ENCODE measurements at regions of chr15 and their contacts with region 1.

Region 1: DNA sequence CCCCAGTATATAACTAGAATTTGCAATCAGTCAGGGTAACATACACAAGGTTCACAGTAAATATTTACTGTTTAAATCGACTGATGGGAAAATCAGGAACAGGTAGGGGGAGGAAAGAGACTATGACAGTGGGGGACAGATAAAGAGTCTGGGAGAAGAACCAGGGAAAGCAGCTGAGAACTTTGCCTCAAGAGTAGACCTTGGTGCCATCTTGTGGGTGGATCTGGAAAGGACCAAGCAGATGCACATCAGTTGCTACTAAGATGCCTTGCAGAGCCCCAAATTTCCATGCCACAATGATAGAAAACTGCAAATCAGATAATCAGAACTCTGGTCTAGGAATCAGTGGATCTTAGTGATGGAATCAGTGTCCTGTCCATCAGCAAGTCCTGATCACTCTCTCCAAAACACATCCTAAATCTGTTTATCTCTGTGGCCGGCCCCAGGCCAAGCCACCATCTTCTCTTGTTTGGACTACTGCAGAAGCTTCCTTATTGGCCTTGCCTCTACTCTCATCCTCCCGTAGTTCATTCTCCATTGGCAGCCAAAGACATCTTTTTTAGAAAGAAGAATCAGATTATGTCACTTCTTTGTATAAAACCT is 62.7 kb downstream of the PDE8A start:
- DNase-seq: peak in 2 of 3 donors; percentile 41 to 50
- H3K4me3 ChIP-seq: no peak overlapping the region
- H3K4me3 Mint-ChIP-seq: no peak overlapping the region
- H3K27ac ChIP-seq: no peak overlapping the region
- H3K27ac Mint-ChIP-seq: peak overlapping the region in 1 of 7 donors; percentile 53
- H3K4me1 ChIP-seq: peaks cover 0 to 5% of the 10 kb centered on the region in 2 donors
- H3K4me1 Mint-ChIP-seq: peaks cover 8% of the 10 kb centered on the region
- H3K27me3 ChIP-seq: no peaks in the 10 kb centered on the region
- H3K27me3 Mint-ChIP-seq: peaks cover 0 to 1% (median 0%) of the 10 kb centered on the region in 3 donors
- CTCF ChIP-seq: peak; percentile 68

Region 2: DNA sequence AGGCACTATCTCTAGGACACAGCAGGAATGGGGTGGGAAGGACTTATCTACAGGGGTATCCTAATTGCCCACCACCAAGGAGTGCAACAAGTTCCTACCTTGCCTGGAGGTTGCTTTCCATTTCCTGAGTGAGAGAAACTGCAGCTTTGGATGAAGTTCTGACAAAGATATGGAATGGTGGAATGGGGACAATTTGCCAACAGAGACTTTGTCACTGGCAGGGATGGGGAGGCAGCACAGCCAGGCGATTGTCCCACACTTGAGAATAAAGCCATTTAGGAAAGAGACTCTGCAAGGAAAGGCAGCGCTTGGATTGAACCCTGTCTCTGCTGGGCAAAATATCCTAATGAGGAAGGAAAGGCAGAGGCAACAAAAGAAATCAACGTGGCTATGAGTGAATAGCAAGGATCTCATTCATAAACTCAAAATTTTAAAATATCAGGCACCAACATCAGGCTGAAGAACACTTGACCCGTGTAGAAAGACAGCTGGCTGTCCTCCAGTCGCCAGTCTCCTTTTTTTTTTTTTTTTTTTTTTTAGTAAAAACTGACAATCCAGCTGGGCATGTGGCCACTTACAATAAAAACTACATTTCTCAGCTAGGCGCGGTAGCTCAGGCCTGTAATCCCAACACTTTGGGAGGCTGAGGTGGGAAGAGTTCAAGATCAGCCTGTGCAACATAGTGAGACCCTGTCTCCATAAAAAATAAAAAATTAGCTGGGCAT is 94.3 kb before region 1 on chr15:
- intact Hi-C with region 1: loop called in 1 of 2 experiments (anchors 5 kb)
- DNase-seq: no peak
- H3K4me3 ChIP-seq: no peak overlapping the region
- H3K4me3 Mint-ChIP-seq: no peak overlapping the region
- H3K27ac ChIP-seq: no peak overlapping the region
- H3K27ac Mint-ChIP-seq: peak overlapping the region in 1 of 7 donors; percentile 15
- H3K4me1 ChIP-seq: no peaks in the 10 kb centered on the region
- H3K4me1 Mint-ChIP-seq: no peaks in the 10 kb centered on the region
- H3K27me3 ChIP-seq: no peaks in the 10 kb centered on the region
- H3K27me3 Mint-ChIP-seq: peaks cover 0 to 6% (median 1%) of the 10 kb centered on the region in 3 donors
- CTCF ChIP-seq: no peak

Region 3: DNA sequence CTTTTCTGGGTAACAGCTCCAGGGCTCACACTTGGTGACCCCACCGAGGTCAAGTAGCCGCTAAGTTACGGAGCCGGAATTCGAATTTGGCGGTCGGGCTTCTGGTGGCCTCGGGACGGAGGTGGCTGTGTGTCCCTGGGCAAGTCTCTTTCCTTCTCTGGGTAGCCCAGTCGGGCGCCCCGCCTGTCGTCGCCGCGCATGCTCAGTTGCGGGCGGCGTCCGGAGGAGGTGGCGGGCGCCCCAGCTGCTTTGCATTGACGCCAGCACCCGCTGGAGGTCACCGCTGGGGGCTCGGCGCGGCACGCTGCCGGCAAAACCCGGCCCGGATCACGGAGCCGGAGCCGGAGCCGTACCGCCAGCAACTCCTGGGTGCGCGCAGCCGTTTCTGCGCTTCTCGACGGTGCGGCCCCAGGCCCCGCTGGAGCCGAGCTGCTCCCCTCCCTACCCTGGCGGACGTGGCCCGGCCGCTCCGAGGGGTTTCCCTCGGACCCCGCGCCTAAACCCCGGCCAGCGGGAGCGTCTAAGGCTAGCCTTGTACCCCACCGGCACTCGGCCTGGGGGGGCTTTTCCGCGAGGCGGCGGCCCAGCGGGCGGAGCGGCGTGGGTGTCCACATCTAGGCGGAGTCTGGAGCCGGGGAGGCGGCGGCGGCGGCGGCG is 63.2 kb before region 1 on chr15:
- intact Hi-C with region 1: loop called in 1 of 2 experiments (anchors 5 kb)
- DNase-seq: peak; percentile 93 to 96 (median 95)
- H3K4me3 ChIP-seq: peak overlapping the region; percentile 87 to 97 (median 96)
- H3K4me3 Mint-ChIP-seq: peak overlapping the region; percentile 95
- H3K27ac ChIP-seq: peak overlapping the region; percentile 92 to 94
- H3K27ac Mint-ChIP-seq: peak overlapping the region; percentile 93 to 98 (median 97)
- H3K4me1 ChIP-seq: peaks cover 22 to 26% of the 10 kb centered on the region in 2 donors
- H3K4me1 Mint-ChIP-seq: peaks cover 39% of the 10 kb centered on the region
- H3K27me3 ChIP-seq: peaks cover 0 to 9% of the 10 kb centered on the region in 2 donors
- H3K27me3 Mint-ChIP-seq: peaks cover 14 to 24% (median 15%) of the 10 kb centered on the region in 3 donors
- CTCF ChIP-seq: no peak

Region 4: GRCh38 chr15:85063126-85064079 is 19.1 kb after region 1 on chr15:
- intact Hi-C with region 1: no loop called
- DNase-seq: no peak
- H3K4me3 ChIP-seq: no peak overlapping the region
- H3K4me3 Mint-ChIP-seq: no peak overlapping the region
- H3K27ac ChIP-seq: no peak overlapping the region
- H3K27ac Mint-ChIP-seq: no peak overlapping the region
- H3K4me1 ChIP-seq: no peaks in the 10 kb centered on the region
- H3K4me1 Mint-ChIP-seq: peaks cover 6% of the 10 kb centered on the region
- H3K27me3 ChIP-seq: no peaks in the 10 kb centered on the region
- H3K27me3 Mint-ChIP-seq: no peaks in the 10 kb centered on the region
- CTCF ChIP-seq: no peak